H1 (cell line): ENCODE measurements at regions of chr1 and their contacts with region 1.

Region 1: GRCh38 chr1:31961536-31961935 is 23.4 kb upstream of the PTP4A2 start:
- DNase-seq: no peak
- H3K4me3 ChIP-seq: no peak overlapping the region
- H3K27ac ChIP-seq: no peak overlapping the region
- H3K4me1 ChIP-seq: no peaks in the 10 kb centered on the region; a peak in 1 of 7 replicates
- H3K27me3 ChIP-seq: no peaks in the 10 kb centered on the region
- CTCF ChIP-seq: no peak
- EP300 ChIP-seq: no peak
- POLR2A ChIP-seq: no peak
- RAD21 ChIP-seq: no peak

Region 2: DNA sequence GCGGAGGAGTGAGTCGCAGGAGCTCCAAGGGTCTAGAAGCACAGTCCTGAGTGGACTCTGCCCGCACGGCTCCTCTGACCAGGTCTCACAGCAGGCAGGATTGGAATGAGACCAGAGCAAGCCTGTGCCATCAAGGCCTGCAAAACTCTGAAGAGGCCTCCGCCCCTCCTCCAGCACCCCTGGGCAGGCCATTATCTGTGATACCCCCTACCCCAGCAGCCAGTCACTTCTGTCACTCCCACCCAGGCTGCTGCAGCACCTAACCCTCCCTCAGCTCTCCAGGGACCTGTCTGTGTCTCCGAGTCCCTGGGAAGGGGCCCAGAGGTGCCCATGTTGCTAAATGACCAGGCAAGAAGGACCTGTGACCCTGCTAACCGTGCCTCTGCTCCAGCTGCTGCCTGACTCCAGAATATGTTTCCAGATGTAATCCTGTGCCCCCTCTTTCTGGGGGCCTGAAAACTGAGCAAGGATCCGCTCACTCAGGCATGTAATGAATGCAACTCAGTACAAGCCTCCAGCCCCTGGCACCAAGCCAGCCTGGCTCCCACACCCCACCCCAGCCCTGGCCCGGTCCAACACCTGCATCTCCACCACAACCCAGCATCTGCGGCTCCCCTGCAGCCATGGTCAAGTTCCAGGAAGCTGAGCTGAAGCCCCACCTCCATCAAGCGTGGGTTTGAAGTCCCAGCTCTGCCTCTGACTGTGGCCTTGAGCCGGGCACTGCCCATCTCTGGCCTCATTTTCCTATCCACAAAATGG is 235.6 kb before region 1 on chr1:
- CTCF ChIA-PET with region 1: no interaction called
- POLR2A ChIA-PET with region 1: no interaction called
- DNase-seq: no peak
- H3K4me3 ChIP-seq: no peak overlapping the region
- H3K27ac ChIP-seq: no peak overlapping the region
- H3K4me1 ChIP-seq: peaks cover 0 to 5% (median 2%) of the 10 kb centered on the region in 4 experiments; a peak in 2 of 7 replicates
- H3K27me3 ChIP-seq: no peaks in the 10 kb centered on the region; a peak in 1 of 7 replicates
- CTCF ChIP-seq: no peak
- EP300 ChIP-seq: no peak
- POLR2A ChIP-seq: no peak
- RAD21 ChIP-seq: no peak

Region 3: GRCh38 chr1:31848381-31848897 is 113.1 kb before region 1 on chr1:
- CTCF ChIA-PET with region 1: no interaction called
- POLR2A ChIA-PET with region 1: no interaction called
- DNase-seq: no peak
- H3K4me3 ChIP-seq: no peak overlapping the region
- H3K27ac ChIP-seq: no peak overlapping the region
- H3K4me1 ChIP-seq: no peaks in the 10 kb centered on the region
- H3K27me3 ChIP-seq: no peaks in the 10 kb centered on the region
- CTCF ChIP-seq: no peak
- EP300 ChIP-seq: no peak
- POLR2A ChIP-seq: no peak
- RAD21 ChIP-seq: no peak

Region 4: DNA sequence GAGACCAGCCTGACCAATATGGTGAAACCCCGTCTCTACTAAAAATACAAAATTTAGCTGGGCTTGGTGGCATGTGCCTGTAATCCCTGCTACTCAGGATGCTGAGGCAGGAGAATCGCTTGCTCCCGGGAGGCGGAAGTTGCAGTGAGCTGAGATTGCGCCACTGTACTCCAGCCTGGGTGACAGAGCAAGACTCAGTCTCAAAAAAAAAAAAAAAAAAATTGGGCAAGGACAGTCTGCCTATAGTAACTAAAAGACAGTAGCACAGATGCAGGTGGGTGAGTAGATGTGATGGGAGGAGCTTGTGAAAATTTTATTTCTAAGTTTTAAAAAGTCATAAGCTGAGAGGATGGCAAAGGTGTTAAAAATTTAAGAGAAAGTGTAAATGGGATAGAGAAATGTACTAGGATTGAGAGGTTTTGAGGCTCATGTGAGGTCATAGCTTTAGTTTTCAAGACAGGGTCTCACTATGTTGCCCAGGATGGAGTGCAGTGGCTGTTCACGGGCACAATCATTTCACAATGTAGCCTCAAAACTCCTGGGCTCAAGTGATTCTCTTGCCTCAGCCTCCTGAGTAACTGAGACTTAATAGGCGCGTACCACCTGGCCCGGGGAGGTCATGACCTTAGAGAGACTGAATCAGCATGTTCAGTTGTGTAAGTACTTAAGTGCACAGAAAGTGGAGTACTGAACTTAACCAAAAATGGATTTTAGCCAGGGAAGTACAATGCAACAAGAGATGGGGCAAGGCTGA is 57.0 kb before region 1 on chr1:
- CTCF ChIA-PET with region 1: interaction called, 12 read pairs
- POLR2A ChIA-PET with region 1: no interaction called
- DNase-seq: no peak
- H3K4me3 ChIP-seq: no peak overlapping the region
- H3K27ac ChIP-seq: no peak overlapping the region
- H3K4me1 ChIP-seq: no peaks in the 10 kb centered on the region
- H3K27me3 ChIP-seq: no peaks in the 10 kb centered on the region
- CTCF ChIP-seq: no peak
- EP300 ChIP-seq: no peak
- POLR2A ChIP-seq: no peak
- RAD21 ChIP-seq: no peak

Region 5: GRCh38 chr1:31944205-31945089 is 17.1 kb before region 1 on chr1:
- CTCF ChIA-PET with region 1: interaction called, 27 read pairs
- POLR2A ChIA-PET with region 1: interaction called, 61 read pairs
- DNase-seq: peak; percentile 82 to 93
- H3K4me3 ChIP-seq: peak overlapping the region; percentile 58 to 69 (median 66)
- H3K27ac ChIP-seq: peak overlapping the region; percentile 89
- H3K4me1 ChIP-seq: peaks cover 3 to 16% (median 5%) of the 10 kb centered on the region in 4 experiments
- H3K27me3 ChIP-seq: peaks cover 0 to 3% (median 0%) of the 10 kb centered on the region in 4 experiments; a peak in 2 of 7 replicates
- CTCF ChIP-seq: peak in 1 of 3 experiments; percentile 0; a peak in 1 of 4 replicates
- EP300 ChIP-seq: peak in 1 of 2 experiments; percentile 72; a peak in 1 of 3 replicates
- POLR2A ChIP-seq: peak; percentile 94 to 98
- RAD21 ChIP-seq: no peak; a peak in 1 of 4 replicates